Activated naive CD4-positive, alpha-beta T cell treated with anti-CD3 and anti-CD28 coated beads for 36 hours (primary cell): ENCODE measurements at regions of chr3 and their contacts with region 1.

Region 1: GRCh38 chr3:158845765-158846350 is 44.0 kb downstream of the MFSD1 start:
- DNase-seq: peak; percentile 40
- H3K4me3 Mint-ChIP-seq: no peak overlapping the region
- H3K27ac Mint-ChIP-seq: no peak overlapping the region
- H3K4me1 Mint-ChIP-seq: peaks cover 15% of the 10 kb centered on the region
- H3K27me3 Mint-ChIP-seq: no peaks in the 10 kb centered on the region

Region 2: DNA sequence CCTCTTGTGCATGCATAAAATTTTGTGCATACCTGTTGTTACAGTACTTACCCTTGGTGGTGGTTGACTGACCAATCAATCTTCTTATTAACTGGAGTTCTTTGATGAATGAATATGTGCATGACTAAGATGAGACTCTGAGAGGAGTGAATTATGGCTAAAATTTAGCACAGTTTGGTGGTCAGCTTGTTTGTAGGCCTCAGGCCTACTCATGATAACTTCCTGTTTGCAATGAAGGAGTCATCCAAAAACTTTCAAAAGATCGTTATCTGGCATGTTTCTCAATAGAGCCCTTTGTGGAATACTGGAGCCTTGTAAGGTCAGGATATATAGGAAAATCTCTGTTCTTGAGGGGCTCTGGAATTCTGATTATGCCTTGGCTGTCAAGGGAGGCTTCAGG is 1953.2 kb before region 1 on chr3:
- CTCF ChIA-PET with region 1: no interaction called
- intact Hi-C with region 1: no loop called
- DNase-seq: no peak
- H3K4me3 Mint-ChIP-seq: no peak overlapping the region
- H3K27ac Mint-ChIP-seq: no peak overlapping the region
- H3K4me1 Mint-ChIP-seq: no peaks in the 10 kb centered on the region
- H3K27me3 Mint-ChIP-seq: no peaks in the 10 kb centered on the region

Region 3: GRCh38 chr3:158882445-158882844 is 36.6 kb after region 1 on chr3:
- CTCF ChIA-PET with region 1: no interaction called
- intact Hi-C with region 1: no loop called
- DNase-seq: no peak
- H3K4me3 Mint-ChIP-seq: no peak overlapping the region
- H3K27ac Mint-ChIP-seq: no peak overlapping the region
- H3K4me1 Mint-ChIP-seq: no peaks in the 10 kb centered on the region
- H3K27me3 Mint-ChIP-seq: no peaks in the 10 kb centered on the region

Region 4: GRCh38 chr3:158918008-158918407 is 72.2 kb after region 1 on chr3:
- CTCF ChIA-PET with region 1: no interaction called
- intact Hi-C with region 1: loop called (anchors 2 kb)
- DNase-seq: peak; percentile 51
- H3K4me3 Mint-ChIP-seq: no peak overlapping the region
- H3K27ac Mint-ChIP-seq: no peak overlapping the region
- H3K4me1 Mint-ChIP-seq: no peaks in the 10 kb centered on the region
- H3K27me3 Mint-ChIP-seq: peaks cover 5% of the 10 kb centered on the region

Region 5: GRCh38 chr3:159252772-159253384 is 407.0 kb after region 1 on chr3:
- CTCF ChIA-PET with region 1: interaction called, 92 read pairs
- intact Hi-C with region 1: no loop called
- DNase-seq: no peak
- H3K4me3 Mint-ChIP-seq: no peak overlapping the region
- H3K27ac Mint-ChIP-seq: no peak overlapping the region
- H3K4me1 Mint-ChIP-seq: no peaks in the 10 kb centered on the region
- H3K27me3 Mint-ChIP-seq: peaks cover 5% of the 10 kb centered on the region

Region 6: GRCh38 chr3:159804726-159805410 is 959.0 kb after region 1 on chr3:
- CTCF ChIA-PET with region 1: no interaction called
- intact Hi-C with region 1: loop called (anchors 2 kb)
- DNase-seq: peak; percentile 57
- H3K4me3 Mint-ChIP-seq: no peak overlapping the region
- H3K27ac Mint-ChIP-seq: no peak overlapping the region
- H3K4me1 Mint-ChIP-seq: no peaks in the 10 kb centered on the region
- H3K27me3 Mint-ChIP-seq: no peaks in the 10 kb centered on the region

Region 7: DNA sequence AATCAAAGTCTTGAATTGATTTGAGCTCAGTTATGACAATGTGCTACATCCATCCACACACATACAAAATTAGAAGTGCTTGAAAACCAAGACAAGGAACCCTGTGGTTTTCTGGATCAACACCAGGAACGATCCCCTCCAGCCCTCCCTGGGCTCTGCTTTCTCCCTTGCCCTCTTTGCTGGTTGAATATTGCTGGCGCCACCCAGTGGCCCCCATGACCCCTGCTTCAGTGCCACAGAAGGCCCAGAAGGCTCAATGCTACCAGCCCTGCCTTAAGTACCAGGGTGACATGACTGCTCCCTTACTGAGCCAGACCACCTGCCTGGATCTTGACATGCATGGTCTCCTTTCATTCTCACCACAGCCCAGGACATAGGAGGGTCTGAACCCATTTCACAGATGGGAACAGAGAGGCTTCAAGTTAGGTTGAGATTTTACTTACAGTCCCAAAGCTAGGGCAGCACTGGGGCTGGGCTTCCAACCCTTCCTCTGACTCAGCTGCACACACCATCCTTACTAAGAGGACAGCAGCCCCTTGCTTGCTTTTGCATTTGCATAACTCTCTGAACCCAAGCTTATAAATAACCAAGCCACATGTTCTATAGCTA is 1157.8 kb after region 1 on chr3:
- CTCF ChIA-PET with region 1: interaction called, 3 read pairs
- intact Hi-C with region 1: loop called (anchors 5 kb)
- DNase-seq: peak; percentile 62
- H3K4me3 Mint-ChIP-seq: no peak overlapping the region
- H3K27ac Mint-ChIP-seq: no peak overlapping the region
- H3K4me1 Mint-ChIP-seq: no peaks in the 10 kb centered on the region
- H3K27me3 Mint-ChIP-seq: no peaks in the 10 kb centered on the region

Region 8: DNA sequence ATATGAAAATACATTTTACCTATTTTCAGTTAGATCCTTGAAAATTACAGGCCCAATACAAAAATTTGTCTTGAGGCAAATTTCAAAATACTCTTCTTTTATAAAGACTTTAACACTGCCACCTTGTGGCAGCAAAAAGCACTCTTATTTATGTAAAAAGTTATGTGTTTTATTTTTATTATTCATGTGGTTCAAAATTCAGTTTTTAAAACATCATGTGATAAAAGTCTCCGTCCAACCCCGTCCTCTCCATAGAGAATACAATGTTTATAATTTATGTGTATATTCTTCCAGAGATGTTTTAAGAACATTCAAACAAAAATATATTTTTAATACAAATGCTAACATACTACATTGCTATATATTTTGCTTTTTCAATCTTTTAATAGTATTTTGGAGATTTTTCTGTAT is 1640.6 kb after region 1 on chr3:
- CTCF ChIA-PET with region 1: no interaction called
- intact Hi-C with region 1: loop called (anchors 10 kb)
- DNase-seq: peak; percentile 14
- H3K4me3 Mint-ChIP-seq: no peak overlapping the region
- H3K27ac Mint-ChIP-seq: no peak overlapping the region
- H3K4me1 Mint-ChIP-seq: peaks cover 5% of the 10 kb centered on the region
- H3K27me3 Mint-ChIP-seq: peaks cover 7% of the 10 kb centered on the region